Activated CD8-positive, alpha-beta T cell treated with anti-CD3 and anti-CD28 coated beads for 36 hours (primary cell): ENCODE measurements at regions of chr5 and their contacts with region 1.

Region 1: DNA sequence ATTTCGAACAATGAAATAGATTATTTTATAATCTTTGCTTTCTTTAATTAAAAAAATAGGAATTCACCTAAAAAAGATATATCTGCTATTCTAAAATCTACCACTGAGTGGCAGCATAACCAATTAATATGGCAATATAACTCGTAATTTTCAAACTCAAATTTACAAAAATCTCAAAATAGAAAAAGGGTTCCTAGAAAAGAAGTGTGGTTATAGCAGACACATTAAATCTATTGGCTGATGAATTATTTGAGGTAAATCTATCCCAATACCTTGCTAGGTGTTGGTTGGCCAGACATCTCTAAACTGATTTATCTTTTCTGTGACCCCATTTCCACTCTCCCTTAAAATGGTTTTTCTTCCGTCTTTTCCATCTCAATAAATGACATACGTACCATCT is 30.2 kb upstream of the NRG2 start:
- DNase-seq: no peak
- ATAC-seq: no peak
- H3K4me3 Mint-ChIP-seq: no peak overlapping the region
- H3K27ac Mint-ChIP-seq: no peak overlapping the region
- H3K4me1 Mint-ChIP-seq: no peaks in the 10 kb centered on the region
- H3K27me3 Mint-ChIP-seq: peaks cover 19% of the 10 kb centered on the region
- CTCF ChIP-seq: peak; percentile 77

Region 2: DNA sequence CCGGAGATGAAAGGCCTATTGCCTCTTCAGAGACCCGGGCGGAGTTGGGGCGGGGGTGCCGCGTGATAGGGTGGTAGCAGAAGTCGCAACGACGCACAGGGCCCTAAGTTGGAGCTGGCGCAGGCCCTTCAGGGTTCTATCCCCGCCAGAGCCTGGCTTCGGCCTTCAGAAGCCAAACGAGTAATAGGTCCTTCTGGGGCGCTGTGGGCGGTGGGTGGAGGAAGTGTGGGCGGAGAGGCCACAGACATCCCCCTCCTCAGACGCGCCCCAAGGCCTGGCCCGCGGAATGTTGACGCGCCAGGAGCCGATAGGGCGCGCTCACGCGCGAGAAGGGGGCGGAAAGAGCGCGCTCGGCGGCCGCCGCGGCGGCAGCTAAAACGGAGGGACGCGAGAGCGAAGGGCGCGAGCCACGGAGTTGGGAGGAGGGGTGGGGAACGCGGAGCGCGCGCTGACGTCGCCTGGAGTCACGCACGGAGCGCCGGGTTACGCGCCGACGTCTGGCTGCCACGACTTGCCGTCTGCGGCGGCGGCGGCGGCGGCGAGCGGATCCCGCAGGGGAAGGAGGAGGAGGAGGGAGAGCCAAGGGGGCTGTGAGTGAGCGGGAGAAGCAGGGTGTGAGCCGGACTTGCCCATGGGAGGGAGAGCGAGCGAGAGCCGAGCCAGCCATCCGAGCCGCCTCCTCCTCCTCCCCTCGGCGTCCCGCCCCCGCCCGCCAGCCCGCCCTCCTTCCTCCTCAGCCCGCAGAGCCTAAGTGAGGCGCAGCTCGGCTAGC is 34.2 kb after region 1 on chr5:
- CTCF ChIA-PET with region 1: interaction called, 10 read pairs
- POLR2A ChIA-PET with region 1: no interaction called
- intact Hi-C with region 1: no loop called
- DNase-seq: peak; percentile 93
- ATAC-seq: peak; percentile 91
- H3K4me3 Mint-ChIP-seq: peak overlapping the region; percentile 99
- H3K27ac Mint-ChIP-seq: peak overlapping the region; percentile 91
- H3K4me1 Mint-ChIP-seq: peaks cover 39% of the 10 kb centered on the region
- H3K27me3 Mint-ChIP-seq: peaks cover 22% of the 10 kb centered on the region
- CTCF ChIP-seq: peak; percentile 15

Region 3: DNA sequence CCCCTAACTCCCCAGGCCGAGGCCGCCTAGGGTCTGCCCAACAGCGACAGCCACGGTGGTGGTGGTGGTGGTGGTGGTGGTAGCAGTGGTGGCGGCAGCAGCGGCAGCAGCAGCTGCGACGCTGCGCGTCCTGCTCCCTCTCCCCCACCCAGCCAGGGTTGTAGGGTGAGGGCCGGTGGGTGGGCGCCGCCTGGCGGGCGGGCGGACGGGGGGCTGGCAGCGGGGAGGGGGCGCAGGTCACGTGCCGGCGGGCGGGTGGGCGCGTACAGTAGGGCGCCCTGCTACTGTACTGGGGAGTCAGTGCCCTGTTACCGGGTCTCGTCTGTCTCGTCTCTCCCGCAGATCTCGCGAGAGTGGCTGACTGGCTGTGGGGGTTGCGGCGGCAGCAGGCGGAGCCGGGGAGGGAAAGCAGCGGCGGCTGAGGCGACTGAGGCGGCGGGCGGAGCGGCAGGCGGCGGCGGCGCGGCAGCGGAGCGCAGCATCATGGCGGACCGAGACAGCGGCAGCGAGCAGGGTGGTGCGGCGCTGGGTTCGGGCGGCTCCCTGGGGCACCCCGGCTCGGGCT is 40.5 kb after region 1 on chr5 and contains the start of gene PURA:
- CTCF ChIA-PET with region 1: interaction called, 10 read pairs
- POLR2A ChIA-PET with region 1: no interaction called
- intact Hi-C with region 1: no loop called
- DNase-seq: peak; percentile 97
- ATAC-seq: peak; percentile 91
- H3K4me3 Mint-ChIP-seq: peak within 1 kb of the TSS; percentile 95
- H3K27ac Mint-ChIP-seq: peak within 1 kb of the TSS; percentile 91
- H3K4me1 Mint-ChIP-seq: peaks cover 63% of the 10 kb centered on the region
- H3K27me3 Mint-ChIP-seq: peaks cover 22% of the 10 kb centered on the region
- CTCF ChIP-seq: no peak
- total RNA-seq, gene PURA: 8.2 to 9.2 TPM

Region 4: GRCh38 chr5:140151730-140152597 is 78.7 kb after region 1 on chr5:
- CTCF ChIA-PET with region 1: interaction called, 96 read pairs
- POLR2A ChIA-PET with region 1: interaction called, 4 read pairs
- intact Hi-C with region 1: loop called (anchors 1 kb)
- DNase-seq: no peak
- ATAC-seq: no peak
- H3K4me3 Mint-ChIP-seq: no peak overlapping the region
- H3K27ac Mint-ChIP-seq: no peak overlapping the region
- H3K4me1 Mint-ChIP-seq: peaks cover 4% of the 10 kb centered on the region
- H3K27me3 Mint-ChIP-seq: peaks cover 4% of the 10 kb centered on the region
- CTCF ChIP-seq: no peak

Region 5: GRCh38 chr5:140157032-140157803 is 83.9 kb after region 1 on chr5:
- CTCF ChIA-PET with region 1: interaction called, 40 read pairs
- POLR2A ChIA-PET with region 1: interaction called, 4 read pairs
- intact Hi-C with region 1: loop called (anchors 1 kb)
- DNase-seq: peak; percentile 92
- ATAC-seq: peak; percentile 100
- H3K4me3 Mint-ChIP-seq: peak overlapping the region; percentile 49
- H3K27ac Mint-ChIP-seq: no peak overlapping the region
- H3K4me1 Mint-ChIP-seq: peaks cover 5% of the 10 kb centered on the region
- H3K27me3 Mint-ChIP-seq: no peaks in the 10 kb centered on the region
- CTCF ChIP-seq: peak; percentile 78

Region 6: GRCh38 chr5:140182803-140183367 is 109.6 kb after region 1 on chr5:
- CTCF ChIA-PET with region 1: no interaction called
- POLR2A ChIA-PET with region 1: no interaction called
- intact Hi-C with region 1: no loop called
- DNase-seq: no peak
- ATAC-seq: no peak
- H3K4me3 Mint-ChIP-seq: no peak overlapping the region
- H3K27ac Mint-ChIP-seq: no peak overlapping the region
- H3K4me1 Mint-ChIP-seq: peaks cover 4% of the 10 kb centered on the region
- H3K27me3 Mint-ChIP-seq: no peaks in the 10 kb centered on the region
- CTCF ChIP-seq: no peak